Gastrocnemius medialis (tissue), 4 donors: ENCODE measurements at regions of chr13 and their contacts with region 1.

Region 1: GRCh38 chr13:45231722-45232121 is 30.9 kb upstream of the KCTD4 start:
- DNase-seq: no peak
- ATAC-seq: no peak
- H3K4me3 ChIP-seq: no peak overlapping the region
- H3K27ac ChIP-seq: no peak overlapping the region
- H3K4me1 ChIP-seq: no peaks in the 10 kb centered on the region
- H3K27me3 ChIP-seq: no peaks in the 10 kb centered on the region
- CTCF ChIP-seq: no peak
- POLR2A ChIP-seq: no peak

Region 2: GRCh38 chr13:45178349-45179162 is 53.2 kb before region 1 on chr13:
- in situ Hi-C with region 1: loop called in 1 of 4 experiments (anchors 10 kb)
- intact Hi-C with region 1: no loop called
- DNase-seq: no peak
- ATAC-seq: no peak
- H3K4me3 ChIP-seq: no peak overlapping the region
- H3K27ac ChIP-seq: no peak overlapping the region
- H3K4me1 ChIP-seq: no peaks in the 10 kb centered on the region
- H3K27me3 ChIP-seq: no peaks in the 10 kb centered on the region
- CTCF ChIP-seq: no peak
- POLR2A ChIP-seq: no peak